ENCODE measurements at regions of chr11 and their contacts with region 1.

Region 1: GRCh38 chr11:62556108-62556871 is 9.7 kb upstream of the AHNAK start:
- DNase-seq: peak; percentile 70
- H3K4me3 ChIP-seq: peak overlapping the region; percentile 39
- CTCF ChIP-seq: no peak

Region 2: DNA sequence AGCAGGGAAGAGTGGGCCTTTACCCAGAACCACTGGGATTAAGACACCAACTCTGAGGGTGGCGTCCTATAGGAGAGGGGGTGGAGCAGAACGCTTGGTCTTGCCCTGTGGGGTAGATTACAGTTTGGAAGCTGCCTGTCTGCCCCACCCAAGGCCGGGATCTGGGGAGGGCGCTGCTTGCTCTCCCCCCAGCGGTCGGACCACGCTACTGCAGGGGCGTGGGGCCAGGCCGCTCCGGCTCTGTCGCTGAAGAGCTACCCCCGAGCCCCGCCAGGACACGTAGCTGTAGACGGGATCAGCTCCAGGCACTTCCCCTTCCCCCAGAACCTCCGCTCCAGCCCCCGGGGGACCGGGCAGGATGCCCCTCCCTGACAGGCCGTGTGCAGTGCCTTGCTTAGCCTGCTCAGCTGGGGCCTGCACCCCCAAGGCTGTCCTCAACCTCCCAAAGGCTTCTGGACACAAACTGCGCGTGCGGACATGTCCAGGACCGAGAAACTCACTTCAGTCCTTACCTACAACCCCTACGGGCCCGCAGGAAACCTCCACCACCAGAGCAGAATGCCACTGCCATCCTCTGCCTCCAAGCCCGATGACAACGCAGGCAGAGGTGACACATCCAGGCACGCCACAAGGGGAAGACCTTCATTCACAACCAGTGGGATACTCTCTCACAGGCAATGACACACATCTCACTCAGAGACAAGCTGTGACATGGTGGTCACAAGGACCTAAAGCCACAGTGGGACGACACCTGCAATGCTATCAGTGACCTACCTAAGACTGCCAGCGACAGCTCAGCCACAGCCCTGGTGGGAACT is 13.3 kb before region 1 on chr11:
- CTCF ChIA-PET with region 1: interaction called, 187 read pairs
- POLR2A ChIA-PET with region 1: interaction called, 77 read pairs
- DNase-seq: peak; percentile 28
- H3K4me3 ChIP-seq: peak overlapping the region; percentile 98
- CTCF ChIP-seq: peak; percentile 98

Region 3: GRCh38 chr11:62573592-62574362 is 17.5 kb after region 1 on chr11 and contains the start of gene EEF1G:
- CTCF ChIA-PET with region 1: interaction called, 61 read pairs
- POLR2A ChIA-PET with region 1: interaction called, 23 read pairs
- DNase-seq: peak; percentile 99
- H3K4me3 ChIP-seq: peak within 1 kb of the TSS; percentile 97
- CTCF ChIP-seq: no peak

Measured in AG04449 (cell line).